Pancreas (tissue), 10 donors: ENCODE measurements at regions of chr17 and their contacts with region 1.

Region 1: GRCh38 chr17:57243171-57243948 is 13.0 kb upstream of the MSI2 start:
- DNase-seq: peak; percentile 38 to 87 (median 64)
- ATAC-seq: peak; percentile 71 to 100 (median 94)
- H3K4me3 ChIP-seq: no peak overlapping the region
- H3K27ac ChIP-seq: no peak overlapping the region
- H3K4me1 ChIP-seq: no peaks in the 10 kb centered on the region
- H3K27me3 ChIP-seq: no peaks in the 10 kb centered on the region
- CTCF ChIP-seq: peak; percentile 87 to 96 (median 95)

Region 2: DNA sequence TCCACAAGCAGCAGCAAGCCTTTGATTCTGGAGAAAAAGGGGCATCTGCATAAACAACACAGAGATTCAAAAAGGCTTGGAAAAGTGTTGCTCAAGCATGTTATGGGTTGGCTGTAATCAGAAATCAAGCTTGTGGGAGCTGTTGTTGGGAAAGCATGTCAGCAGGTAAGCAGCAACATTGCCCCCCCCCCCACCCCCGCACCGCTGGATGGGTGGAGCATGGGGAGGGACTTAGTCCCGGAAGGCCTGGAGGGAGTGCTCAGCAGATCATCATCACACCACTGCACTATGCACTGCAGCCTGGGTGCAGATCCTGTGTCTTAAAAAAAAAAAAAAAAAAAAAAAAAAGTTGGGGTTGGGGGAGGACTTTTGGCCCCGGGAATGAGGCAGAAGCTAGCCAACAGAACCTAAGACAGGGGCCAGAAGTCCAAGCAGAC is 175.1 kb before region 1 on chr17:
- intact Hi-C with region 1: no loop called
- DNase-seq: no peak
- ATAC-seq: peak in 3 of 4 donors; percentile 46 to 58 (median 47)
- H3K4me3 ChIP-seq: no peak overlapping the region
- H3K27ac ChIP-seq: no peak overlapping the region
- H3K4me1 ChIP-seq: no peaks in the 10 kb centered on the region
- H3K27me3 ChIP-seq: no peaks in the 10 kb centered on the region
- CTCF ChIP-seq: no peak

Region 3: GRCh38 chr17:57671667-57672632 is 428.6 kb after region 1 on chr17:
- intact Hi-C with region 1: loop called in 1 of 3 experiments (anchors 10 kb)
- DNase-seq: peak; percentile 37 to 84 (median 66)
- ATAC-seq: peak; percentile 89 to 97 (median 96)
- H3K4me3 ChIP-seq: no peak overlapping the region
- H3K27ac ChIP-seq: no peak overlapping the region
- H3K4me1 ChIP-seq: no peaks in the 10 kb centered on the region
- H3K27me3 ChIP-seq: no peaks in the 10 kb centered on the region
- CTCF ChIP-seq: peak; percentile 77 to 90 (median 85)

Region 4: DNA sequence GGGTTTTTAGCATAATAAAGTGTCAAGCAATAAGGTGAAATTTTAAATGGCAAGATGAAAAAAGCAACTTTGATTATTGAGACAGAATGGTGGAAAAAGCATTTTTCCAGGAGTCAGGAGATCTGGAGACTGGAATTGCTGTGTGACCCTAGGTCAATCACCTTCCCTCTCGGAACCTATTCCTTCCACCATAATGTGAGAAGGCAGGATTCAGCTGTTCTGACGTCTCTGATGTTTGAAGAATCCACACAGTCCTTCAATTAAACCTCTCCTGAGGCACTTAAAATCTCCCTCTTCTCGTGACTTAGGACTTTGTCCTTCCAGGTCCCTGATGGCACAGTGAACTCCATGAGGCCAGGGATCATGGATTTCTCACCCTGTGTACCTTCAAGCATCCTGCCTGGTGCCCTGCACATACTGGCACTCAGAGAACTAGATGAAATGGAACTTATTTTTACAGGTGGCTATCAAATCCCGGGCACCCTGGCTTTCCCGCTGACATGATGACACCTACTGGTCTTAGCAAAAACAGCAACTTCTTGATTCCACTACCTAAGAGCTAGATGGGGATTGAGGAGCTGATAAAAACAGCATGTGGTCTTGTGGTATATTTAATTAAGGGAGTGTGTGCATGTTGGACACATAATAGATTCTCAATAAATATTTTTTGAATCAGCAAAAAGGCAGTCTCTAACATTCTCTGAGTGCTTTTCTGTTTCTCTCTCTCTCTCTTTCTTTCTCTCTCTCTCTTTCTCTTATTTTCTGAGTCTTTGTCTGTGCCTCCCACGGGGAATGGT is 504.1 kb after region 1 on chr17:
- intact Hi-C with region 1: loop called in 1 of 3 experiments (anchors 5 kb)
- DNase-seq: peak in 2 of 6 donors; percentile 10 to 29
- ATAC-seq: peak; percentile 58 to 87 (median 84)
- H3K4me3 ChIP-seq: no peak overlapping the region
- H3K27ac ChIP-seq: no peak overlapping the region
- H3K4me1 ChIP-seq: peaks cover 0 to 5% (median 0%) of the 10 kb centered on the region in 3 donors
- H3K27me3 ChIP-seq: no peaks in the 10 kb centered on the region
- CTCF ChIP-seq: peak in 3 of 4 donors; percentile 38 to 51 (median 49)